ENCODE measurements at regions of chr1 and their contacts with region 1.

Region 1: GRCh38 chr1:167220537-167221125 is at the start of gene POU2F1:
- DNase-seq: peak; percentile 99
- H3K4me3 Mint-ChIP-seq: peak within 1 kb of the TSS; percentile 98
- H3K27ac Mint-ChIP-seq: peak within 1 kb of the TSS; percentile 93
- H3K4me1 Mint-ChIP-seq: peaks cover 40% of the 10 kb centered on the region
- H3K27me3 Mint-ChIP-seq: no peaks in the 10 kb centered on the region
- total RNA-seq, gene POU2F1: 17.4 to 20.4 TPM

Region 2: GRCh38 chr1:167059045-167059808 is 161.4 kb before region 1 on chr1:
- CTCF ChIA-PET with region 1: interaction called, 20 read pairs
- POLR2A ChIA-PET with region 1: interaction called, 8 read pairs
- DNase-seq: peak; percentile 79
- H3K4me3 Mint-ChIP-seq: no peak overlapping the region
- H3K27ac Mint-ChIP-seq: peak overlapping the region; percentile 22
- H3K4me1 Mint-ChIP-seq: peaks cover 14% of the 10 kb centered on the region
- H3K27me3 Mint-ChIP-seq: peaks cover 2% of the 10 kb centered on the region

Region 3: GRCh38 chr1:167263819-167264464 is 43.3 kb after region 1 on chr1:
- CTCF ChIA-PET with region 1: interaction called, 12 read pairs
- POLR2A ChIA-PET with region 1: interaction called, 8 read pairs
- DNase-seq: no peak
- H3K4me3 Mint-ChIP-seq: no peak overlapping the region
- H3K27ac Mint-ChIP-seq: no peak overlapping the region
- H3K4me1 Mint-ChIP-seq: peaks cover 20% of the 10 kb centered on the region
- H3K27me3 Mint-ChIP-seq: no peaks in the 10 kb centered on the region

Region 4: DNA sequence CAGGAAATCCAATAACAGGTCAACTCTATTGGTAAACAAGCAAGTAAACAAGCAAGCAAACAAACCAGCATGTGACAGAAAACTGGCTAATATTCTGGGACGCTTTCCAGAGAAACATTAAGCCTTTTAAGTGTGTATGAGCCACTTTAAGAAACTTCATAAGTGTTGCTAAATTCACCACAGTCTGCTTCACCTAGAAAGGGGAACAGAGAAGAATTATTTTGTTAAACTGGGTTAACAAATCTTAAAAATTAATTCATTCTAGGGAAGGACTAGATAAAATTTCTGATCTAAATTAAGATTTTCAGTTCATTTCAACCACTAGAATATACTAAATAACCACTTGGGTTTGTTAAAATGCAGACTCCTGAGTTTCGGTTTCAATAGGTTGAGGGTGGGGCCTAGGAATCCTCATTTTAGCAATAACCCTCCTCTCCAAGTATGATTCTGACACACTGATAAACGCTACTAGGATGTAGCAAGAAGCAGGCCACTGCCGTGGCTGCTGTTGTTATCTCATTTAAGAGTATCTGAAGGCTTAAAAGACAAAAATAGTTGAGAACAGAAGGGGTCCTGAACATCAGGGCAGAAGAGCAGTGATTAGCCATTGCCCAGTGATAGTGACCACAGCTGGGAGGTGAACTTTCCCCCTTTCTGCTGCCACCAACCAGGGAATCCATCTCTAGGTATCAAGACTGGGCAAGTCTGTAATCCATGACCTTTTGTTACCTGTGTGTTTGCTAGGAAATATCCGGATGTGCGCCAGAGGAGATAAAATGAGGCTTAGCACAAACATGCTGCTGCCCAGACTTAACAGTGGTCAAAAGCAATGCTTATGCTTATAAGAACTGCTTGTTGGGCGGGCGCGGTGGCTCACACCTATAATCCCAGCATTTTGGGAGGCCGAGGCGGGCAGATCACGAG is 321.7 kb after region 1 on chr1:
- CTCF ChIA-PET with region 1: interaction called, 10 read pairs
- POLR2A ChIA-PET with region 1: interaction called, 6 read pairs
- DNase-seq: peak; percentile 43
- H3K4me3 Mint-ChIP-seq: peak overlapping the region; percentile 15
- H3K27ac Mint-ChIP-seq: peak overlapping the region; percentile 90
- H3K4me1 Mint-ChIP-seq: peaks cover 68% of the 10 kb centered on the region
- H3K27me3 Mint-ChIP-seq: no peaks in the 10 kb centered on the region

Region 5: DNA sequence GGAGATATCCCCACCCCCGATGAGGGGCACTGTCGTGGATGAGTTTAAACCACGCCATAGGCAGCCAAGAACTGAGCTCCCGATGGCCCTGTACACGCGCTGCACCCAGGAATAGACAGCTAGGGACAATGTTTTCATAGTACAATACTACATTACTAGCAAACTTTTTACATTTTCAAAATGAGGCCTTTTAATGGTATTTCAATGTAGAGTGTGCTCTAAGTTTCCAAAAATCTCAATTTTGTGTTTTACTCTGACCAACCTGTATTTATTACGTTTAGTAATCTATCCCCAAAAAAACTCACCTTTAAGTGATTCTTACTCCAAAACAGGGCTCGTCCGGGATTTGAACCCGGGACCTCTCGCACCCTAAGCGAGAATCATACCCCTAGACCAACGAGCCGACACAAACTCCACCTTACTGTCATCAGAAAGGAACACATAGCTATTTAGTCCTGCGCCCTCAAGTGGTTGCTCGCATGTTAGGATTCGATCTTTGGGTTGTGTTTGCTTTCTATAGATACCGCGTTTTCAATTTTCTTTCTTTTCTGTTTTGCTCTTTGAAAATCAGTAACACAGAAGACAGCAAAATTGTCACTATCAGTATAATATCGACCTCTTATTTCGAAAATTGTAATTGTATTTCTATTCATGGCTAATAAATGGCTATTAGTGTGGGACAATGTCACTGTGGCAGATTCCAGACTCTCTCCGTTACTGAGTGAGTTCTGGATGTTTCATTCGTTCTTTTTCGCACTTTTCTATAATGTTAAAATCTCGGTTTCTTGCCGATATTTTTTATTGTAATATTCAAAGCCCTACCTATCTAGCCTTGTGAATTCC is 494.7 kb after region 1 on chr1:
- CTCF ChIA-PET with region 1: interaction called, 12 read pairs
- POLR2A ChIA-PET with region 1: interaction called, 3 read pairs
- DNase-seq: peak; percentile 92
- H3K4me3 Mint-ChIP-seq: peak overlapping the region; percentile 84
- H3K27ac Mint-ChIP-seq: peak overlapping the region; percentile 92
- H3K4me1 Mint-ChIP-seq: peaks cover 46% of the 10 kb centered on the region
- H3K27me3 Mint-ChIP-seq: peaks cover 7% of the 10 kb centered on the region